ENCODE measurements at regions of chr17 and their contacts with region 1.

Region 1: GRCh38 chr17:8894673-8895578 is 27.5 kb upstream of the PIK3R6 start:
- DNase-seq: peak; percentile 65
- ATAC-seq: peak; percentile 66
- H3K4me3 ChIP-seq: peak overlapping the region; percentile 14; the same call in 1 of the 2 replicates
- H3K27ac ChIP-seq: peak overlapping the region; percentile 98
- H3K4me1 ChIP-seq: peaks cover 71% of the 10 kb centered on the region
- H3K27me3 ChIP-seq: no peaks in the 10 kb centered on the region
- CTCF ChIP-seq: peak; percentile 74 to 90 (median 83)
- EP300 ChIP-seq: no peak
- POLR2A ChIP-seq: no peak; the same call in none of the 2 replicates
- RAD21 ChIP-seq: peak; percentile 84

Region 2: DNA sequence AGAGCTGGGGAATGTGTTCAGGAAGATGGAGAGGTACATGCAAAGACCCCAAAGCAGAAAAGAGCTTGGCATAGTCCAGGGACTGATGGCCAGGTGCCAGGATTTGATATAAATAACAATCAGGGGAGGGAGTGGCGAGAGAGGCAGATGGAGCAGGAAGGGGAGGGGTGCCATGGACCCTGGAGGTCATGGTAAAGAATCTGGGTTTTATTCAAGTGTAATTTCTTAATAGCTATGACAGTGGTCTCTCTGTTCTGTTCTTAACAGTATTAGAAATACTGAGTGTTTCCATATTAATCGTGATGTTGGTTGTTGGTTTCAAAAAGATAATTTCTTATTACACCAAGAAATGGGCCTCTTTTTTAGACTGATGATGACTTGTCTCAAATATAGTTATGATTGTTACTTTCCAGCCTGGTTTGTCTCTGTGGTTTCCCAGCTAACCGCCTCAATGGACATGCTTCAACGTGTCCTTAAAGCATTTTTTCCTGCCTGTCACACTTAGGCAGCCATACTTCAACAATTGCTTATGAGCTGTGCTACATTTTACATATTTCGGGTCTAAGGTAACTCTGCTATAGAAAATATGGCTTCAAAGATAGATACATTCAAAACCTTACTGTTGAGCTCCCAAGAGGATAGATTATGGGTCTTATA is 313.8 kb before region 1 on chr17:
- CTCF ChIA-PET with region 1: no interaction called
- POLR2A ChIA-PET with region 1: no interaction called
- RAD21 ChIA-PET with region 1: no interaction called
- SMC1A ChIA-PET with region 1: no interaction called
- in situ Hi-C with region 1: no loop called
- intact Hi-C with region 1: no loop called
- DNase-seq: peak; percentile 46
- ATAC-seq: peak; percentile 89
- H3K4me3 ChIP-seq: no peak overlapping the region
- H3K27ac ChIP-seq: peak overlapping the region; percentile 10; the same call in 1 of the 2 replicates
- H3K4me1 ChIP-seq: peaks cover 15% of the 10 kb centered on the region
- H3K27me3 ChIP-seq: no peaks in the 10 kb centered on the region
- CTCF ChIP-seq: no peak
- EP300 ChIP-seq: peak; percentile 11 to 13; a peak in 1 of 4 replicates
- POLR2A ChIP-seq: no peak
- RAD21 ChIP-seq: no peak

Region 3: DNA sequence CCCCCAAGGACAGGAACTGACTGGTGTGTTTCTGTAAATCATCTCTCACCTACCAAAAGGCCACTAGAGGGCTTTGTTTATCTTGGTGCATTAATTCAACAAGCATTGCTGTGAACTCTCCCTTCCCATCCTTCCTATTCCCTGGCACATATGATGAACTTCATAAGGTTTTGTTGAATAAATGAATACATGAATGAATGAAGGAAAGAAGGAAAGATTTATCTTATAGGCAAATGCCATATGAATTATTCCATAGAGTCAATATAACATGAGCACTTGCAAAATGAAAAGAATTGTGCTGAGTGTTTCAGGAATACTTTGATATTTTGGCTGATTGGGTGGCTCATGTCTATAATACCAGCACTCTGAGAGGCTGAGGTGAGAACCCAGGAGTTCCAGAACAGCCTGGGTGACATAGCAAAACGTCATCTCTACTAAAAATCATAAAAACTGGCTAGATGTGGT is 140.9 kb before region 1 on chr17:
- CTCF ChIA-PET with region 1: interaction called, 69 read pairs
- POLR2A ChIA-PET with region 1: no interaction called
- RAD21 ChIA-PET with region 1: interaction called, 10 read pairs
- SMC1A ChIA-PET with region 1: interaction called, 21 read pairs
- in situ Hi-C with region 1: loop called (anchors 5 kb)
- intact Hi-C with region 1: loop called (anchors 1 kb)
- DNase-seq: no peak
- ATAC-seq: peak; percentile 83
- H3K4me3 ChIP-seq: no peak overlapping the region
- H3K27ac ChIP-seq: no peak overlapping the region
- H3K4me1 ChIP-seq: no peaks in the 10 kb centered on the region
- H3K27me3 ChIP-seq: no peaks in the 10 kb centered on the region; a peak in 1 of 4 replicates
- CTCF ChIP-seq: peak; percentile 56 to 67 (median 58); a peak in 5 of 6 replicates
- EP300 ChIP-seq: no peak
- POLR2A ChIP-seq: no peak
- RAD21 ChIP-seq: peak; percentile 57

Region 4: DNA sequence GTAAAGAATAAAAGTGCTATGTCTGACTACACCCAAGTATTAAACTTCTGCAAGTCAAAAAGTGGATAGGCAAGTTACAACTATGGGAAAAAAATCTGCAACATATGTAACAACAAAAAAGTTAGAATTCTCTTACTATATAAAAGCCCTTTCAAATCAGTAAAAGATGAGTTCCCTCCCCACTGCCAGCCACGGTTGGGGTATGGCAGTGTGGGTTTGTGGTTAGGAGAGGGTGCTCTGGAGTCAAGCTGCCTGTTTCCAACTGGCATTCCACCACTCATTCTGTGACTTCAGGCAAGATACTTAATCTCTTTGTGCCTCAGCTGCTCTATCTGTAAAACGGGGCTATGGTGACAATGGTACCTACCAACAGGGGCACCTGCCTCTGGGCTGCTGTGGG is 69.1 kb before region 1 on chr17:
- CTCF ChIA-PET with region 1: interaction called, 14 read pairs
- POLR2A ChIA-PET with region 1: no interaction called
- RAD21 ChIA-PET with region 1: interaction called, 5 read pairs
- SMC1A ChIA-PET with region 1: interaction called, 4 read pairs
- in situ Hi-C with region 1: no loop called
- intact Hi-C with region 1: no loop called
- DNase-seq: no peak
- ATAC-seq: no peak
- H3K4me3 ChIP-seq: no peak overlapping the region
- H3K27ac ChIP-seq: no peak overlapping the region
- H3K4me1 ChIP-seq: no peaks in the 10 kb centered on the region
- H3K27me3 ChIP-seq: no peaks in the 10 kb centered on the region
- CTCF ChIP-seq: no peak
- EP300 ChIP-seq: no peak
- POLR2A ChIP-seq: no peak
- RAD21 ChIP-seq: no peak

Region 5: GRCh38 chr17:8857919-8858318 is 37.0 kb before region 1 on chr17:
- CTCF ChIA-PET with region 1: interaction called, 28 read pairs
- POLR2A ChIA-PET with region 1: interaction called, 74 read pairs
- RAD21 ChIA-PET with region 1: interaction called, 92 read pairs
- SMC1A ChIA-PET with region 1: interaction called, 64 read pairs
- in situ Hi-C with region 1: no loop called
- intact Hi-C with region 1: loop called (anchors 1 kb)
- DNase-seq: peak; percentile 95
- ATAC-seq: peak; percentile 40
- H3K4me3 ChIP-seq: peak overlapping the region; percentile 57; the same call in 1 of the 2 replicates
- H3K27ac ChIP-seq: peak overlapping the region; percentile 99
- H3K4me1 ChIP-seq: peaks cover 60% of the 10 kb centered on the region
- H3K27me3 ChIP-seq: no peaks in the 10 kb centered on the region
- CTCF ChIP-seq: no peak
- EP300 ChIP-seq: peak; percentile 98 to 99
- POLR2A ChIP-seq: no peak
- RAD21 ChIP-seq: peak; percentile 12; the same call in 1 of the 2 replicates

Region 6: GRCh38 chr17:8954339-8954738 is 59.4 kb after region 1 on chr17:
- CTCF ChIA-PET with region 1: interaction called, 13 read pairs
- POLR2A ChIA-PET with region 1: interaction called, 7 read pairs
- RAD21 ChIA-PET with region 1: interaction called, 38 read pairs
- SMC1A ChIA-PET with region 1: interaction called, 208 read pairs
- in situ Hi-C with region 1: no loop called
- intact Hi-C with region 1: loop called (anchors 2 kb)
- DNase-seq: no peak
- ATAC-seq: peak; percentile 72
- H3K4me3 ChIP-seq: no peak overlapping the region
- H3K27ac ChIP-seq: peak overlapping the region; percentile 81
- H3K4me1 ChIP-seq: peaks cover 85% of the 10 kb centered on the region
- H3K27me3 ChIP-seq: no peaks in the 10 kb centered on the region
- CTCF ChIP-seq: no peak
- EP300 ChIP-seq: peak; percentile 9 to 27; a peak in 1 of 4 replicates
- POLR2A ChIP-seq: peak; percentile 31; the same call in 1 of the 2 replicates
- RAD21 ChIP-seq: no peak

Region 7: DNA sequence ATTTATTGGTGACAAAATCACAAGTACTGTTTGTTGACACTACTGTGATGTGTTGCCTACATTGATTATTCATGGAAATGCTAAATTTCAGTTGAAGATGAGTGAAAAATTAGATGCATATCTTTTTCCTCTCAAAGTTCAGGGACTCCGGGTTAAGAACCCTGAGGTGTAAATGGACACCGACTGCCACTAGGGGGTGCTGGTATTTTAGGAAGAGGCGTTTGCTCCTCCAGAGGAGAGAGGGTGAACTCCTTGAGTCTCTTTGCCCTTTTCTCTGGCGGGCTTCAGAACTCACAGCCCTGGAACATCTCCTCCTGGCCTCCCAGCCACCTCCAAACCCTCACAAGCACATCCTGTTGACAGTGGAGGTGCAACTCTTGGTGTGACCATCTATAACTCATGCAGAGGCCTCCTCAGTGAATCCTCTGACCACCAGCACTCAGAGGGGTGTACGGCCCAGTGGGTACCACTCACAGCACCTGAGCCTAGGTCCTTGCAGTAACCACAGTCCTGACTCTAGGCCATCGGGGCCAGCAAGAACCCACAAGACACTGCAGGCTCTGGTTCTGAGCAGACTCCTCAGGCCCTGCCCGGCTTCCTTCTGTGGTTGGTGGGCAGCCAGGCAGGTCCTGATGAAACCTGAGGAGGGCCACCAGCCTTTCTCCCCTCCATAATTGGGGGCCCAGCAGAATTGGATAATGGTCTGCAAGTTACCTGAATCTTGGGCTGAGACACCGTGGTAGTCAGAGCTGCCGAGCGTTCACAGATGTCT is 96.8 kb after region 1 on chr17:
- CTCF ChIA-PET with region 1: interaction called, 162 read pairs
- POLR2A ChIA-PET with region 1: interaction called, 4 read pairs
- RAD21 ChIA-PET with region 1: interaction called, 52 read pairs
- SMC1A ChIA-PET with region 1: interaction called, 37 read pairs
- in situ Hi-C with region 1: no loop called
- intact Hi-C with region 1: no loop called
- DNase-seq: no peak
- ATAC-seq: peak; percentile 74
- H3K4me3 ChIP-seq: no peak overlapping the region
- H3K27ac ChIP-seq: no peak overlapping the region
- H3K4me1 ChIP-seq: peaks cover 12% of the 10 kb centered on the region
- H3K27me3 ChIP-seq: no peaks in the 10 kb centered on the region
- CTCF ChIP-seq: peak; percentile 38 to 77 (median 71)
- EP300 ChIP-seq: no peak
- POLR2A ChIP-seq: no peak
- RAD21 ChIP-seq: peak; percentile 57

Region 8: GRCh38 chr17:9072696-9073339 is 177.9 kb after region 1 on chr17:
- CTCF ChIA-PET with region 1: no interaction called
- POLR2A ChIA-PET with region 1: no interaction called
- RAD21 ChIA-PET with region 1: no interaction called
- SMC1A ChIA-PET with region 1: no interaction called
- in situ Hi-C with region 1: no loop called
- intact Hi-C with region 1: no loop called
- DNase-seq: no peak
- ATAC-seq: no peak
- H3K4me3 ChIP-seq: no peak overlapping the region
- H3K27ac ChIP-seq: no peak overlapping the region
- H3K4me1 ChIP-seq: no peaks in the 10 kb centered on the region
- H3K27me3 ChIP-seq: peaks cover 2 to 5% of the 10 kb centered on the region in 2 experiments; a peak in 2 of 4 replicates
- CTCF ChIP-seq: no peak
- EP300 ChIP-seq: no peak
- POLR2A ChIP-seq: no peak
- RAD21 ChIP-seq: no peak